ENCODE measurements at regions of chr5 and their contacts with region 1.

Region 1: GRCh38 chr5:69093771-69094482 is at the start of gene SLC30A5:
- DNase-seq: peak; percentile 92 to 100 (median 99)
- ATAC-seq: peak; percentile 98 to 100 (median 99)
- H3K4me3 ChIP-seq: peak within 1 kb of the TSS; percentile 74 to 82
- H3K4me3 Mint-ChIP-seq: peak within 1 kb of the TSS; percentile 87 to 93 (median 91)
- H3K27ac ChIP-seq: peak within 1 kb of the TSS; percentile 56
- H3K27ac Mint-ChIP-seq: peak within 1 kb of the TSS; percentile 88 to 90
- H3K4me1 ChIP-seq: peaks cover 11 to 29% of the 10 kb centered on the region in 2 experiments
- H3K4me1 Mint-ChIP-seq: peaks cover 21 to 40% (median 36%) of the 10 kb centered on the region in 3 donors
- H3K27me3 ChIP-seq: no peaks in the 10 kb centered on the region
- H3K27me3 Mint-ChIP-seq: no peaks in the 10 kb centered on the region
- total RNA-seq, gene SLC30A5: 22.2 to 33.0 (median 26.9) TPM

Region 2: DNA sequence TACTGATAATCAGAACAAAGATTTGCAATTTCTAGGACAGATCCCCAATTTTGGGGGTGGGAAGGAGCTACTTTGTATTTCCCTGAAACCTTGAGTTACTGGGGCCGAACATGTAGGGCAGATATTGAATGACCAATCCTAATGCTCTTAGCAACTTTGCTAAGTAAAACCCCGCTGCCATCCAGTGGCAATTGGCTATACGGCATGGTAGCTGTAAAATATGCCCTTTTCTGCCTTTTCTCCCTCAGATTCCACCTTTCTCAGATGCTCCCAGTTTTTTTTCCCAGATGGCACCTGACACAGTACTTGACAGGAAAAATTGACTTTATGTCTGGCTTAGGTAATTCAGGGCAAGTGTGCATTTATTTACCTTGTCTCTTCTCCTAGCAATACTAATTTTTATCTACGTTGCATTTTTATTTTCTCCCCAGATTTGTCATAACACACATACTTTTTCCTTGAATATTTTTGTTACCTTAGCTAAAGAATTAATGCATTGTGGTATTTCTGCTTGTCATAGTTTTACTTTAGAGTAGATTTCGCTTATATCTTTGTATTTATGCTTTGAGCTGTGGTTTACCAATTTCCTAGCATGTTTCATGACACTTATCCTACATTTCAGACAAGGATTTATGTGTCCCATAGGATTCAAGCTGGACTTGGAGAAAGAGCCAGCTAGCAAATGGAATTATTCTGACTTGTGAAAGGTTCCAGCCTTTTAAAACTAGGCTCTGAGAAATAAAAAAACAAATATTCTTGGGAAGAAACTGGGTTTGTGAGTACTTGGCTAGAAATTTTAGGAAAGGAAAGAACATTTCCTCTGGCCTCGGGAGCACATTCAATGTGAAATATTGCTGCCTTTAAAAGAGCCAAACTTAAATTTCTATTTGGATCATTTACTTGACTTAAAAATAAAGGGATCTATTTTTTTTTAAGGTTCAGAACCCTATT is 841.0 kb before region 1 on chr5:
- CTCF ChIA-PET with region 1: no interaction called
- POLR2A ChIA-PET with region 1: no interaction called
- DNase-seq: peak in 25 of 35 experiments; percentile 10 to 71 (median 42)
- ATAC-seq: no peak
- H3K4me3 ChIP-seq: no peak overlapping the region
- H3K4me3 Mint-ChIP-seq: no peak overlapping the region
- H3K27ac ChIP-seq: peak overlapping the region; percentile 58
- H3K27ac Mint-ChIP-seq: peak overlapping the region; percentile 84 to 95
- H3K4me1 ChIP-seq: peaks cover 48 to 60% of the 10 kb centered on the region in 2 experiments
- H3K4me1 Mint-ChIP-seq: peaks cover 90 to 96% (median 93%) of the 10 kb centered on the region in 3 donors
- H3K27me3 ChIP-seq: no peaks in the 10 kb centered on the region
- H3K27me3 Mint-ChIP-seq: no peaks in the 10 kb centered on the region

Region 3: DNA sequence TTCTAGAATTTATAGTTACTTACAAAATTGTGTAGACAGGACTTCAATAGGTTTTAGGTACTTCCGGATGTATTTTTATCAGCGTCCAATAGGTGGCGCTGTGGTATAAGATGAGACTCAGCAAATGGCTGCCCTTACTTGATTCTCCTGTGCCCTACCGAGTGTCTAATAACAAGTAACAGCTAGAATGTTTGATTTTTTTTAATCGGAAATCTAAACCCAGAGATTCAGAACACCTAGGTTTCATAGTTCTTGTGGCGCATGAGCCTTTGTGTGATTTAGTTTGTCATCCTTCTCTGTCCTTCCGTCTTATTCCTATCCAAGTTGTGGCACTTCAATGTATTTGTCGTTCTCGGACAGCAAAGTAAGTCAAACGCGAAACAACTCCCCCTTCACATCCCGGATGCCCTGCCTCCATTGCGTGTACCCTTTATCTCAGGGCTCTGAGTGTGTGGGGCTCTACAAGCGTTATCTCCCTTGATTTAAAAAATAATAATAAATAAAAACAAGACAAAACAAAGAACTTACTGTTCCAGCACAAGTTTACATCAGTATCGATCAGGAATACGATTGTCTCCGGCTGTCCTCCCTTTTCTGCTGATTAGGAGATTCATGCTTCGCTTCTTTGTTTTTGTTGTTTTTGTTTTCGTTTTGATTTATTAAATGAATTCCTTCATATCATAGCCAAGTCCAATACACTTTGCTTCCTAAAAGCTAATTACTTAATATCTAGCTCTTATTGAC is 50.8 kb before region 1 on chr5:
- CTCF ChIA-PET with region 1: interaction called, 4 to 24 read pairs
- POLR2A ChIA-PET with region 1: no interaction called
- DNase-seq: peak; percentile 48 to 97 (median 74)
- ATAC-seq: peak; percentile 95 to 97 (median 96)
- H3K4me3 ChIP-seq: peak overlapping the region; percentile 49 to 53
- H3K4me3 Mint-ChIP-seq: peak overlapping the region; percentile 79 to 84 (median 83)
- H3K27ac ChIP-seq: peak overlapping the region; percentile 65
- H3K27ac Mint-ChIP-seq: peak overlapping the region; percentile 91 to 93
- H3K4me1 ChIP-seq: peaks cover 0 to 2% of the 10 kb centered on the region in 2 experiments
- H3K4me1 Mint-ChIP-seq: peaks cover 5 to 13% (median 6%) of the 10 kb centered on the region in 3 donors
- H3K27me3 ChIP-seq: no peaks in the 10 kb centered on the region
- H3K27me3 Mint-ChIP-seq: no peaks in the 10 kb centered on the region

Region 4: GRCh38 chr5:69166686-69167492 is 73.0 kb after region 1 on chr5 and contains the start of gene CCNB1:
- CTCF ChIA-PET with region 1: interaction called in 1 of 2 experiments, 15 read pairs
- POLR2A ChIA-PET with region 1: no interaction called
- DNase-seq: peak; percentile 92 to 98 (median 95)
- ATAC-seq: peak; percentile 100
- H3K4me3 ChIP-seq: peak within 1 kb of the TSS; percentile 76 to 91
- H3K4me3 Mint-ChIP-seq: peak within 1 kb of the TSS; percentile 90 to 94 (median 92)
- H3K27ac ChIP-seq: peak within 1 kb of the TSS; percentile 44
- H3K27ac Mint-ChIP-seq: peak within 1 kb of the TSS; percentile 78 to 85
- H3K4me1 ChIP-seq: peaks cover 13 to 16% of the 10 kb centered on the region in 2 experiments
- H3K4me1 Mint-ChIP-seq: peaks cover 21 to 28% (median 26%) of the 10 kb centered on the region in 3 donors
- H3K27me3 ChIP-seq: no peaks in the 10 kb centered on the region
- H3K27me3 Mint-ChIP-seq: no peaks in the 10 kb centered on the region
- total RNA-seq, gene CCNB1: 1.6 to 4.1 (median 3.4) TPM

Region 5: DNA sequence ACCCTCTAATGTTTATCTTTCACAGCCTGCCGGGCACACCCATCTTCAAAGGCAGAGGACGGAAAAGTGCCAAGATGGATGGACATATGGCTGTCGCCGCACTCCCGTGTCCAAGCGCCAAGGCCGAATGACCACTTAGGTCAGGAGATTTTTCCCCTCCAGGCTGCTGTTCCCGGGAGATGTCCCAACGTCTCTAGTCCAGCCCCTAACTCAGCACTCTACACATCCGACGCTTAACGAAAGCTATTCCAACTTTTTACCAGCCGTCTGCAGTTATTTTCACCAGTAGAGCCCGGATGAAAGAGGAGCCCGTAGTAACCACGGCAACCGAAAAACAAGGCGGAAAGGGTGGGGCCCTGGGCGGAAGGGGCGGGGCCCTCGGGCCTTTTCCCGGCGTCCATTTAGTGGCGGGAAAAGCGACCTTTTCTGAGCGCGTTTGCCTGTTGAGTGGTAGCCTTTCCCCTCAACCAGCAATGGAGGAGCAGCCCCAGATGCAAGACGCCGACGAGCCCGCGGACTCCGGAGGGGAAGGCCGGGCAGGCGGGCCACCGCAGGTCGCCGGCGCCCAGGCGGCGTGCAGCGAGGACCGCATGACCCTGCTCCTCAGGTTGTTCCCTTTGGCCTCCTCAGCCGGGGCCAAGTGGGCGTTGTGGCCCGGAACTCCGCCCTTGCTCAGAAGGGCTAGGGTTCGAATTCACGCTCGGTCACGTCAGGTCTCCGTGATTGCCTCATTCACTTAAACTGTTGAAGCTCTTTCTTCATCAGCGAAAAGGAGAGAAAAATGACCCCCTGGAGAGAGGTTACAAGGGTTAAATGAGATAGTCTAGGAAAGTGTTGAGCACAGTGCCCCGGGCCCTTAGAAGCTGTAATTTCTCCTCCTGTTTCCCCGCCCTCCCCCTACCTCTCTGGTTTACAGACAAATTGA is 95.5 kb after region 1 on chr5 and contains the start of gene CENPH:
- CTCF ChIA-PET with region 1: interaction called, 3 to 13 read pairs
- POLR2A ChIA-PET with region 1: no interaction called
- DNase-seq: peak; percentile 78 to 93 (median 87)
- ATAC-seq: peak; percentile 92 to 98 (median 98)
- H3K4me3 ChIP-seq: peak within 1 kb of the TSS; percentile 82 to 88
- H3K4me3 Mint-ChIP-seq: peak within 1 kb of the TSS; percentile 89
- H3K27ac ChIP-seq: peak within 1 kb of the TSS; percentile 39
- H3K27ac Mint-ChIP-seq: peak within 1 kb of the TSS; percentile 77 to 78
- H3K4me1 ChIP-seq: peaks cover 5 to 14% of the 10 kb centered on the region in 2 experiments
- H3K4me1 Mint-ChIP-seq: peaks cover 11 to 16% (median 15%) of the 10 kb centered on the region in 3 donors
- H3K27me3 ChIP-seq: no peaks in the 10 kb centered on the region
- H3K27me3 Mint-ChIP-seq: no peaks in the 10 kb centered on the region
- total RNA-seq, gene CENPH: 4.1 to 8.4 (median 6.5) TPM

Region 6: GRCh38 chr5:69234457-69235268 is 140.7 kb after region 1 on chr5 and contains the start of gene CDK7:
- CTCF ChIA-PET with region 1: interaction called in 1 of 2 experiments, 10 read pairs
- POLR2A ChIA-PET with region 1: interaction called in 1 of 2 experiments, 3 read pairs
- DNase-seq: peak; percentile 79 to 97 (median 91)
- ATAC-seq: peak; percentile 100
- H3K4me3 ChIP-seq: peak within 1 kb of the TSS; percentile 96 to 98
- H3K4me3 Mint-ChIP-seq: peak within 1 kb of the TSS; percentile 91 to 96 (median 95)
- H3K27ac ChIP-seq: peak within 1 kb of the TSS; percentile 73
- H3K27ac Mint-ChIP-seq: peak within 1 kb of the TSS; percentile 79 to 95
- H3K4me1 ChIP-seq: peaks cover 14 to 27% of the 10 kb centered on the region in 2 experiments
- H3K4me1 Mint-ChIP-seq: peaks cover 40 to 41% (median 40%) of the 10 kb centered on the region in 3 donors
- H3K27me3 ChIP-seq: no peaks in the 10 kb centered on the region
- H3K27me3 Mint-ChIP-seq: no peaks in the 10 kb centered on the region
- total RNA-seq, gene CDK7: 21.4 to 26.5 (median 22.0) TPM

Region 7: GRCh38 chr5:69334793-69335268 is 240.9 kb after region 1 on chr5:
- CTCF ChIA-PET with region 1: interaction called, 3 to 17 read pairs
- POLR2A ChIA-PET with region 1: interaction called in 1 of 2 experiments, 3 read pairs
- DNase-seq: peak; percentile 35 to 83 (median 63)
- ATAC-seq: peak; percentile 62 to 71 (median 70)
- H3K4me3 ChIP-seq: no peak overlapping the region
- H3K4me3 Mint-ChIP-seq: peak overlapping the region in 1 of 3 donors; percentile 47
- H3K27ac ChIP-seq: no peak overlapping the region
- H3K27ac Mint-ChIP-seq: peak overlapping the region in 1 of 2 donors; percentile 64
- H3K4me1 ChIP-seq: peaks cover 4 to 22% of the 10 kb centered on the region in 2 experiments
- H3K4me1 Mint-ChIP-seq: peaks cover 16 to 21% (median 19%) of the 10 kb centered on the region in 3 donors
- H3K27me3 ChIP-seq: no peaks in the 10 kb centered on the region
- H3K27me3 Mint-ChIP-seq: no peaks in the 10 kb centered on the region

Region 8: DNA sequence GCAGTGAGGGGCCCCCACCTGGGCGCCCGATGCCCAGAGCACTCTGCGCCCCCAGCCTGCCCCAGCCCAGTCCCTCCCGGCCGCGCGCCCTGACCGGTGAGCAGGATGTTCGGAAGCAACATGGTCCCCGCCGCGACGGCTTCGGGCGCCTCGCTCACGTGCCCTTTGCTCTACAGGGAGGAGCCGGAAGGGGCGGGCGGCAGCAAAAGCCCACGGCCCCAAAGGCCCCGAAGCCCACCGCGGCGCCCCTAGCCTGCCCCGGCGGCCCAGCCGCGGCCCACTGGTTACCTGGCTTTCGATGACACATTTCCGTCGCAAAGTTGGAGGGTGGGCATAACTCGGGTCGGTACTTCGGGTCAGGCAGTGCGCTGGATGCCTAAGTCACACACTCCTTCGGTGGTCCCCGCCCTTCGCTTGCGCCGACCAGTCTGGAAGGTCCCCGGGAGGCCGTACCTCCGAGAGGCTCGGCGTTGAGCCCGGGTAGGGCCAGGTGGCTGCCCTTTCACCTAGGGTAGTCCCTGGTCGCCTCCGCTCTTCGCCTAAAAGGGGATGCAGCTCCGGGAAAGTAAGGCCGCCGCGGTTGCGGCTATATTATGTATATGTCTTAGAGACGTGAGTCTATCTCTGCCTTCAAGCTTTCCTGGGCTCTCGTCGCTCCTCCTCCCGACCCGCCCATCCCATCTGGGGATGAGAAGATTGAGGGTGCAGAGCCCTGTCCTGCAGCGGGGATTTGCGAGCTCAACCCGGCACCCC is 275.6 kb after region 1 on chr5 and contains the starts of genes AK6, RAD17 and TAF9:
- CTCF ChIA-PET with region 1: interaction called, 5 to 13 read pairs
- POLR2A ChIA-PET with region 1: no interaction called
- DNase-seq: peak; percentile 81 to 95 (median 89)
- ATAC-seq: peak; percentile 88 to 95 (median 91)
- H3K4me3 ChIP-seq: peak within 1 kb of the TSS; percentile 88 to 90
- H3K4me3 Mint-ChIP-seq: peak within 1 kb of the TSS; percentile 89 to 94 (median 91)
- H3K27ac ChIP-seq: peak within 1 kb of the TSS; percentile 92
- H3K27ac Mint-ChIP-seq: peak within 1 kb of the TSS; percentile 98 to 99
- H3K4me1 ChIP-seq: peaks cover 15 to 23% of the 10 kb centered on the region in 2 experiments
- H3K4me1 Mint-ChIP-seq: peaks cover 37 to 59% (median 54%) of the 10 kb centered on the region in 3 donors
- H3K27me3 ChIP-seq: no peaks in the 10 kb centered on the region
- H3K27me3 Mint-ChIP-seq: no peaks in the 10 kb centered on the region
- total RNA-seq, gene AK6: 9.5 to 23.8 (median 19.1) TPM
- total RNA-seq, gene RAD17: 23.1 to 30.7 (median 29.7) TPM
- total RNA-seq, gene TAF9: 42.5 to 54.3 (median 50.0) TPM

Measured in T-cell (primary cell).